Naive thymus-derived CD4-positive, alpha-beta T cell (primary cell): ENCODE measurements at regions of chr17 and their contacts with region 1.

Region 1: DNA sequence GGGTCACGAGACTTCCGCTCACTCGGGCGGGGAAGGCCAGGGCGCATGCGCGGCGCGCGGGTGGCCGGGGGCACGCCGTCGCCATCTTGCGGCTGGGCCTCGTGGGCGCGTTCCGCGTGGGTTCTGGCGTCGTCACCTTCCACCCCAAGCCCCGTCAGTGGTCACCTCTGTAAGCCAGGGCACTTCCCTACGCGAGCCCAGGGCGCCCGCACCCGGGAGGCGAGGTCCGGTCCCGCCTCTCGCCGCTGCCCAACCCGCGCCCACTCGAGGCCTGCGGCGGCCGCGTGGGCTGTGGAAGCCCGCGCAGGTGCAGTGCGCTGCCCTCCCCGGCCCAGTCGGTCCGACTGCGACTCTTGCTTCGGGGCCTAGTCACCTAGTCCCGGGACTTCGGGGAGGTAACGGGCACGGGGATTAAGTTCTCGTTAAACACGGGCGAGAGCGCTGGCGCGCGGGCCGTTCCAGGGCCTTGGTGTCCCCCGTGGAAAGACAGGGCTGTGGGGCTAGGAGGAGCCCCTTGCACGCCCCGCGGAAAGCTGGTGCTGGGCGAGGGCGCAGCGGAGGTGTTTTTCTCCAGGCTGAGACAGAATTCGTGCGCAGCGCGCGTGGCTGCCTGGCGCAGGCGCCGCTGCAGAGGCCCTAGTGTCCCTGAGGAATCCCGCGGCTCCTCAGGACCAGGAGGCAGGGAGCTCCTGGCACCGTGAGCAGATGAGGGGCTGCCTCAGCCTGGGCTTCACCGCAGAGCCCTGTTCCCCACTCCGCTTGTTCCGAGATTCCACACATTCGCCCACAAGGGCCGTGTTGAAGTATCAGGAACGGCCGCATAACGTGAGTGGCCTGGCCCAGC is 472 bp upstream of the ARHGDIA start:
- DNase-seq: peak; percentile 93 to 99 (median 97)
- ATAC-seq: peak; percentile 45
- H3K4me3 ChIP-seq: peak overlapping the region; percentile 93
- H3K4me3 Mint-ChIP-seq: peak overlapping the region; percentile 82 to 91 (median 86)
- H3K27ac ChIP-seq: peak overlapping the region; percentile 98
- H3K27ac Mint-ChIP-seq: peak overlapping the region; percentile 88 to 97 (median 95)
- H3K4me1 ChIP-seq: peaks cover 25 to 28% of the 10 kb centered on the region in 2 donors
- H3K4me1 Mint-ChIP-seq: peaks cover 11 to 43% (median 41%) of the 10 kb centered on the region in 7 donors
- H3K27me3 ChIP-seq: no peaks in the 10 kb centered on the region
- H3K27me3 Mint-ChIP-seq: no peaks in the 10 kb centered on the region

Region 2: DNA sequence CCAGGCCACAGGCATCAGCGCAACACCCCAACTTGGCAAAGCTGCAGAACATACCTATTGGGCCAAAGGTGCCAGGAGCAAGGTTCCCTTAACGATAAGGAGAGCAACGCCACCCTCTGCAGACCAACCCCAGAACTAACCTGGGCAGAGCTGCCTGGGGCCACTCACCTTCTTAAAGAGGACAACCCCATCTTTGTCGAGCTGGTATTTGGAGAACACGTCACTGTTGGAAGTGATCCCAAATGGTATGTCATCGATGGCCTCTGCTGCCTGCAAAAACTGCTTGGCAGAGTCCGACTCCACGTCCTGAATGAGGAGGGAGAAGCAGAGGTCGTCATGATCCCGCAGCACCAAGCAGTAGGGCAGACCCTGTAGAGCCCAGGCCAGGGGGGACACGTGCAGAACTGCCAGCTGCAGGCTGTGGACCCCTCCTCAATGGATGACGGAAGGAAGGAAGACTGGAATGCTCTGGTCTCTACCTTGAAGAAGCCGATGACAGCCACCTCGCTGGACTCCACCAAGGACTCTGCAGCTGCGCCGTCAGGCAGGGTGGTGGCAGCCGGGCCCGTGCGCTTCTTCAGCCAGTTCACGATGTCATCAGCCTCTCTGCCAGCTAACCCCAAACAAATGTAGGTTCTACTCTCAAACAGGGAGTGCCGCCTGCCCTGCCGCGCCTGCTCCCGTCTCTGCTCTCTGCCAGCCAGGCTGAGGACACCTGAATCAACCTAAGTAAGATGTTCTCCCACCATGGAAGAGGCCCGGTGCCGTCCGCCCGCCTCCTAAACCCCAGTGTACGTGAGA is 16.4 kb before region 1 on chr17:
- CTCF ChIA-PET with region 1: no interaction called
- POLR2A ChIA-PET with region 1: interaction called, 18 read pairs
- intact Hi-C with region 1: loop called in 1 of 2 experiments (anchors 1 kb)
- DNase-seq: no peak
- ATAC-seq: peak; percentile 30
- H3K4me3 ChIP-seq: no peak overlapping the region
- H3K4me3 Mint-ChIP-seq: no peak overlapping the region
- H3K27ac ChIP-seq: no peak overlapping the region
- H3K27ac Mint-ChIP-seq: no peak overlapping the region
- H3K4me1 ChIP-seq: peaks cover 11 to 17% of the 10 kb centered on the region in 2 donors
- H3K4me1 Mint-ChIP-seq: peaks cover 7 to 32% (median 26%) of the 10 kb centered on the region in 7 donors
- H3K27me3 ChIP-seq: no peaks in the 10 kb centered on the region
- H3K27me3 Mint-ChIP-seq: no peaks in the 10 kb centered on the region

Region 3: DNA sequence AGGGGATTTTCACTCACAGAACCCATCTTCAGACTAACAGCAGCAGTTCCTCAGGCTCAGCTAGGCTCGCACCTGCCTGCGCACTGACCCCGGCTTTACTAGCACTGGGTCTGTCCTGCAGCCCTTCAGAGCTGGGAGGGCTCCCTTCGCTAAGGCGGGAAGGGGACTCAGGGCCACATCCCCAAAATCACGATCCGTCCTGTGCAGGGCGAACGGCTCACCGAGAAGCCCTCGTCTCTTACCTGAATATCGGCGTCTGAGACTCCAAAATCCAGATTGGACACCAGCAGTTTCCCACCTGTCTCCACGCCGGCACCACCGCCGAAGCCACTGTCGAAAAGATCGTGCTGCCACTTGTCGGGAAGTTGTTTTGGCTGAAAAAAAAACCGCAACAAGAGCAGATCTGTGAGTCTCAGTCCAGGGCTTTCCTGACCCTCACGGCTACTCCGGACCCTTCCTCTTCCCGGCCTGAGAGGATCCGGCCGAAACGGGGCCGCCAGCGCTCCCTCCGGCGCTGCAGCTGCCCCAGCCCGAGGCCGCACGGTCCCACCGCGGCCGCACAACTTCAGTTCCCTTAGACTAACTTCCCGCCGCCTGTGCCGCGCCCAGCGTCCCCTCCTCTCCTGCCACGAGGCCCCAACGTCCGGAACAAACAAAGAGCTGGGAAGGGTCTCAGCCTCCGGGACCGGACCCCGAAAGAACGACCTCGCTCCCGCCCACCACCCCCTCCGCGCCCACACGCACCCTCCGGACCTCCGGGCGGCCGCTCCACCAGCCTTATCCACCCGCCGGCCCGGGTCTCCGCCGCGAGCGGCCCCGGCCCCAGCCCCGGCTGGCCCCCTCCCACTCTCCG is 19.1 kb after region 1 on chr17:
- CTCF ChIA-PET with region 1: no interaction called
- POLR2A ChIA-PET with region 1: interaction called, 26 read pairs
- intact Hi-C with region 1: loop called (anchors 1 kb)
- DNase-seq: peak in 1 of 9 donors; percentile 47
- ATAC-seq: no peak
- H3K4me3 ChIP-seq: peak overlapping the region; percentile 79
- H3K4me3 Mint-ChIP-seq: peak overlapping the region; percentile 78 to 96 (median 87)
- H3K27ac ChIP-seq: peak overlapping the region; percentile 82
- H3K27ac Mint-ChIP-seq: peak overlapping the region; percentile 84 to 97 (median 95)
- H3K4me1 ChIP-seq: peaks cover 16 to 20% of the 10 kb centered on the region in 2 donors
- H3K4me1 Mint-ChIP-seq: peaks cover 0 to 32% (median 19%) of the 10 kb centered on the region in 7 donors
- H3K27me3 ChIP-seq: no peaks in the 10 kb centered on the region
- H3K27me3 Mint-ChIP-seq: no peaks in the 10 kb centered on the region

Region 4: GRCh38 chr17:82134101-82134500 is 262.5 kb after region 1 on chr17:
- CTCF ChIA-PET with region 1: no interaction called
- POLR2A ChIA-PET with region 1: no interaction called
- intact Hi-C with region 1: no loop called
- DNase-seq: no peak
- ATAC-seq: no peak
- H3K4me3 ChIP-seq: no peak overlapping the region
- H3K4me3 Mint-ChIP-seq: no peak overlapping the region
- H3K27ac ChIP-seq: no peak overlapping the region
- H3K27ac Mint-ChIP-seq: peak overlapping the region in 6 of 9 donors; percentile 15 to 85 (median 42)
- H3K4me1 ChIP-seq: peaks cover 3 to 9% of the 10 kb centered on the region in 2 donors
- H3K4me1 Mint-ChIP-seq: peaks cover 5 to 19% (median 14%) of the 10 kb centered on the region in 7 donors
- H3K27me3 ChIP-seq: no peaks in the 10 kb centered on the region
- H3K27me3 Mint-ChIP-seq: peaks cover 0 to 3% (median 0%) of the 10 kb centered on the region in 5 donors